ENCODE measurements at regions of chr6 and their contacts with region 1.

Region 1: GRCh38 chr6:45714741-45715507 is 300.7 kb downstream of the CLIC5 start:
- DNase-seq: no peak
- ATAC-seq: peak; percentile 96

Region 2: GRCh38 chr6:44655412-44656342 is 1059.2 kb before region 1 on chr6:
- intact Hi-C with region 1: loop called (anchors 5 kb)
- DNase-seq: peak; percentile 89
- ATAC-seq: peak; percentile 86

Region 3: DNA sequence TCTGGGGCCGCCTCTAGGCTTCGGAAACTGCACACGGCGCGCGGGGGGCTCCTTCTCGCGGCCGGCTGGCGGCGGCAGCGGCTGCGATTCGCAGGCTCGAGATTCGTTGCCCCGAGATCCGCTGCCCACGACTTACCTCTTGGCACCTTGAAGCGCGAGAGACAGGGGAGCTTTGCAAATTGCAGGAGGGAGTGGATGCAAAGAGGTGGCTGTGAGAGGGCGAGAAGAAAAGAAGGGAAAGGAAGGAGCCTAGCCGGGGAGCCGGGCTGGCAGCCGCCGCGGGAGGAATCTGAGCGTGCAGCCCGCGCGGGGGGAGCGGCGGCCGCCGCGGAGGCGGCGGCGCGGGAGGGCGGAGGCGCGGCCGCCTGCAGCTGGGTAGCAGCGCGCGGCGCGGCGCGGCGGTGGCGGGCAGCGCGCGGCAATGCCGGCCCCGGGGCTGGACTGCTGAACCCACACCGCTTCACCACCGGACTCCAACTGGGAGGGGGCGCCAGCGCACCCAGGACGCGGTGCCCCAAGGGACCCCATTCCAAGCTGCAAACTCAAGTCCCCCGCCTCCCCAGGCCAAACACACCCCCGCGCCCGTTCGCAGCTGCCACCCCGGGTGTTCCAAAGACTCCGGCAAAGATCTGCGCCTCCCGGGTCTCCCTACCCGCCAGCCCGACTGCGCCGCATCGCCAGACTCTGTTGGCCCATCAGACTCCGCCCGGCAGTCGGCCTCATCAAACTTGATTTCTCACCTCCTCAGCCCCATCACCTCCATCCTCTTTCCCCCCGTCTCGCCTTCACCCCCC is 293.0 kb before region 1 on chr6:
- intact Hi-C with region 1: loop called (anchors 10 kb)
- DNase-seq: peak; percentile 86
- ATAC-seq: peak; percentile 57